ENCODE measurements at regions of chr11 and their contacts with region 1.

Region 1: GRCh38 chr11:54927704-54928103 is 221.1 kb downstream of the OR4A5 start:
- DNase-seq: no peak
- ATAC-seq: no peak
- H3K4me3 ChIP-seq: no peak overlapping the region
- H3K27ac ChIP-seq: no peak overlapping the region
- H3K4me1 ChIP-seq: no peaks in the 10 kb centered on the region
- H3K27me3 ChIP-seq: no peaks in the 10 kb centered on the region
- CTCF ChIP-seq: no peak

Region 2: GRCh38 chr11:54985731-54986130 is 58.0 kb after region 1 on chr11:
- CTCF ChIA-PET with region 1: no interaction called
- POLR2A ChIA-PET with region 1: no interaction called
- in situ Hi-C with region 1: no loop called
- intact Hi-C with region 1: loop called (anchors 10 kb)
- DNase-seq: no peak
- ATAC-seq: no peak
- H3K4me3 ChIP-seq: no peak overlapping the region
- H3K27ac ChIP-seq: no peak overlapping the region
- H3K4me1 ChIP-seq: no peaks in the 10 kb centered on the region
- H3K27me3 ChIP-seq: no peaks in the 10 kb centered on the region
- CTCF ChIP-seq: no peak

Region 3: GRCh38 chr11:55106391-55106790 is 178.7 kb after region 1 on chr11:
- CTCF ChIA-PET with region 1: no interaction called
- POLR2A ChIA-PET with region 1: no interaction called
- in situ Hi-C with region 1: no loop called
- intact Hi-C with region 1: no loop called
- DNase-seq: no peak
- ATAC-seq: no peak
- H3K4me3 ChIP-seq: no peak overlapping the region
- H3K27ac ChIP-seq: no peak overlapping the region
- H3K4me1 ChIP-seq: no peaks in the 10 kb centered on the region
- H3K27me3 ChIP-seq: no peaks in the 10 kb centered on the region
- CTCF ChIP-seq: no peak

Measured in Panc1 (cell line).